ENCODE measurements at regions of chr9 and their contacts with region 1.

Region 1: GRCh38 chr9:92760070-92760469 is 4.6 kb downstream of the BICD2 start:
- DNase-seq: no peak
- H3K4me3 ChIP-seq: no peak overlapping the region
- H3K27ac ChIP-seq: peak overlapping the region; percentile 10 to 56
- H3K4me1 ChIP-seq: peaks cover 14 to 52% (median 48%) of the 10 kb centered on the region in 4 experiments
- H3K27me3 ChIP-seq: no peaks in the 10 kb centered on the region

Region 2: DNA sequence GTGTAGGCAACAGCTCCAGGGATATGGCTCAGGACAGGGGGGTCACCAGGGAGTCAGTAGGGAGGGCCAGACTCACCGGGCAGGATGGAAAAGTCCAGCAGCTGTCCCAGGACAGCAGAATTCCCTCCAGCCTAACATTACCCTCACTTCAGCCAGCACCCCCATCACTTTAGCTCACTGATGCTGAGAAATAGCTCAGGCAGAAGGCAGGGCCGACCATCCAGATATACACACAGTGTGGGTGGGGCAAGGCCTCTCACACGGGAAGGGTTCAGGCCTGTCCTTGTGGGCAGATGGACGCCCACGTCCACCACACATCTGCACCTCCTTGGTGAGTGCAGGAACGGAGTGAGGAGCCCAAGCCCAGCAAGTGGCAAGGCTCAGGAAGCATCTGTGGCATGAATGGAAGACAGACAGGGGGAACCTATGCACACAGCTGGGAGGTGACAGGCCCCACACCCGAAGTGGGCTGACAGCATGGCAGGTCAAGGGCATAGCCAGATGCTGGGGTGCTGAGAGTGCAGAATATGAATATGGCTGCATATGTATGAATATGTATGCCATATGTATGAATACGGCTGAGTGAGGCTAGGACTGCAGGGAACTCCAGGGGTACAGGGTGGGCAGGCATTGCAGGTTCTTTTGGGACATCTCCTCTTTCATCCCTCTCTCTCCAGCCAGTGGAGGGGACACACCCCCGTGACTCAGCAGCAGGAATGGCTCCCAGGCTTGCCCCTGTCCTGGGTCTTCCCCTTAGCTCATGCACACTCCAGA is 12.4 kb before region 1 on chr9:
- CTCF ChIA-PET with region 1: interaction called, 17 read pairs
- POLR2A ChIA-PET with region 1: interaction called, 5 read pairs
- DNase-seq: peak in 2 of 3 donors; percentile 79 to 89
- H3K4me3 ChIP-seq: peak overlapping the region in 1 of 7 experiments; percentile 16
- H3K27ac ChIP-seq: no peak overlapping the region
- H3K4me1 ChIP-seq: peaks cover 0 to 44% (median 37%) of the 10 kb centered on the region in 4 experiments
- H3K27me3 ChIP-seq: no peaks in the 10 kb centered on the region

Region 3: DNA sequence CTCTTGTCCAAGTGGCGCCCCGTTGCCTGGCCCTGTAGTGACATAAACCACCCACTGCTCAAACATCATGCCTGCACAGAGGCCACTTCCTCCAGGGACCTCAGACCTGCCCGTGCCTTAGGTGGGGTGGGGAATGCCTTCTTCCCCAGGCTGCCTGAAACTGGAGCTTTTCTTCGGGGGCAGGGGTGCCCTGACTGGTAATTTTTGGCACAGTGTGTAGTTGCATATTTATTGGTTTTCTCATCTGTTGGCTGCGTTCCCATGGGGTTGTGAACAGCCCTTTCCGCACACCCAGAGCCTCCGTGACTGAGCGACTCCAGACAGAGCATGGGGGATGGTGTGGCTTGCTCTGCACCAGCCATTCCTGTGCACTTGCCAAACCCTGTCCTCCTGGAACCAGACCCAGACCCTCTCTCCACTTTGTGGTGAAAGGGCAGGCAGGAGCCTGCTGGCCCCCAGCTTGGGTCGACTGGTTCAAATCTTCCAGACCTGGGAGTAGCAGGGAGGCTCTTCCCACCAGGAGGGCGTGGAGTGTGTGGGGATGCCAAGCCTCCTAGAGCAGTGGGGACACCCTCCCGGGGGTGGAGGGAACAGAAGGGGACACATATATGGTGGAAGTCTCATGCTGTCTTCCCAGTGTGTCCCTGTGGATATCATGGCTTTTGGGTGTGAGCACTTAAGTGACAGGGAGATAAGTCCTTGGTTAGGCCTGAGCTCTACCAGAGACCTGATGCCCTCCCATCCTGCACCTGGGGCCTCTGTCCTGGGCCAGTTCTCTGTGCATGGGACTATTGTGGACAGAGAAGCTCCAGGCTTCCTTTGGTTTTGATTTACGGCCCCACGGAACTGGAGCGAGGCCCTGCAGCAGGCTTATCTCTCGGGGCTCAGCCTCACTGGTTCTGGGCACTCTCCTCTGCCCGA is 463.4 kb after region 1 on chr9:
- CTCF ChIA-PET with region 1: no interaction called
- POLR2A ChIA-PET with region 1: no interaction called
- DNase-seq: peak in 2 of 3 donors; percentile 14 to 42
- H3K4me3 ChIP-seq: peak overlapping the region in 2 of 7 experiments; percentile 4 to 25
- H3K27ac ChIP-seq: no peak overlapping the region
- H3K4me1 ChIP-seq: peaks cover 0 to 31% (median 9%) of the 10 kb centered on the region in 4 experiments
- H3K27me3 ChIP-seq: peaks cover 0 to 21% (median 11%) of the 10 kb centered on the region in 5 experiments

Measured in common myeloid progenitor, CD34-positive (primary cell).